ENCODE measurements at regions of chr12 and their contacts with region 1.

Region 1: GRCh38 chr12:100348657-100349454 is 8.0 kb upstream of the SLC17A8 start:
- DNase-seq: no peak
- H3K4me3 ChIP-seq: no peak overlapping the region
- H3K27me3 ChIP-seq: no peaks in the 10 kb centered on the region; the same call in none of the 2 replicates
- CTCF ChIP-seq: peak; percentile 28; the same call in 1 of the 2 replicates

Region 2: GRCh38 chr12:100359822-100360221 is 11.0 kb after region 1 on chr12:
- CTCF ChIA-PET with region 1: interaction called, 14 read pairs
- POLR2A ChIA-PET with region 1: no interaction called
- DNase-seq: no peak
- H3K4me3 ChIP-seq: no peak overlapping the region
- H3K27me3 ChIP-seq: peaks cover 10% of the 10 kb centered on the region
- CTCF ChIP-seq: no peak

Region 3: DNA sequence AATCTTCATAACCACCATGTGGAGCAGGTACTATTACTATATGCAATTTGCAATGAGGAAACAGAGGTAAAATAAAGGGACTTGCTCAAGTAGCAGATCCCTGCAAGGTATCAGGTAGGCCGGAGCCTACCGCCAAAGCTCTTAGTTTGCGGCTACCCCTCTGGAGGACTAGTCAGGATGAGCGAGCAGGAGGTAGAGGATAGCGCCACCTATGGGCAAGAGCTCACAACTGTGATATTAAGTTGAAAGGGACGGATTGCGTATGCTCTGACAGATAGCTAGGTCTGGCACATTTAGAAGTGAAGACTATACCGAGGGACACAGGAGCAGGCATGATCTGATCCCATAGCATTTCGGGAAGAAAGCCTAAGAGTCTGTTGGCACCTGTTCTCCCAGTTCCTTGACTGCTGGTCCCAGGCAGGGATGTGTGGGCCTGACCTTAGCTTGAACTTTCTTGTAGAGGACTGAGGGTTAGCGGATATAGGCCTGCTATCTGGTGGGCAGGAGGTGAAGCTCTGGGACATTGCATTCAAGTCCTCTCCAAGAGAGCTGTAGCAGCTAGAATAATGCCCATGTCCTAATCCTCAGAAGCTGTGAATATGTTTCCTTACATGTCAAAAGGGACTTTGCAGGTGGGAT is 56.0 kb after region 1 on chr12:
- CTCF ChIA-PET with region 1: interaction called, 14 read pairs
- POLR2A ChIA-PET with region 1: no interaction called
- DNase-seq: no peak
- H3K4me3 ChIP-seq: no peak overlapping the region
- H3K27me3 ChIP-seq: no peaks in the 10 kb centered on the region
- CTCF ChIP-seq: peak; percentile 67

Region 4: GRCh38 chr12:100554608-100555077 is 205.8 kb after region 1 on chr12:
- CTCF ChIA-PET with region 1: interaction called, 31 read pairs
- POLR2A ChIA-PET with region 1: no interaction called
- DNase-seq: peak; percentile 68
- H3K4me3 ChIP-seq: no peak overlapping the region
- H3K27me3 ChIP-seq: no peaks in the 10 kb centered on the region
- CTCF ChIP-seq: peak; percentile 87

Measured in BJ (cell line).